Activated B cell treated with CpG ODN at 0.5 μM for 24 hours (primary cell): ENCODE measurements at regions of chr4 and their contacts with region 1.

Region 1: DNA sequence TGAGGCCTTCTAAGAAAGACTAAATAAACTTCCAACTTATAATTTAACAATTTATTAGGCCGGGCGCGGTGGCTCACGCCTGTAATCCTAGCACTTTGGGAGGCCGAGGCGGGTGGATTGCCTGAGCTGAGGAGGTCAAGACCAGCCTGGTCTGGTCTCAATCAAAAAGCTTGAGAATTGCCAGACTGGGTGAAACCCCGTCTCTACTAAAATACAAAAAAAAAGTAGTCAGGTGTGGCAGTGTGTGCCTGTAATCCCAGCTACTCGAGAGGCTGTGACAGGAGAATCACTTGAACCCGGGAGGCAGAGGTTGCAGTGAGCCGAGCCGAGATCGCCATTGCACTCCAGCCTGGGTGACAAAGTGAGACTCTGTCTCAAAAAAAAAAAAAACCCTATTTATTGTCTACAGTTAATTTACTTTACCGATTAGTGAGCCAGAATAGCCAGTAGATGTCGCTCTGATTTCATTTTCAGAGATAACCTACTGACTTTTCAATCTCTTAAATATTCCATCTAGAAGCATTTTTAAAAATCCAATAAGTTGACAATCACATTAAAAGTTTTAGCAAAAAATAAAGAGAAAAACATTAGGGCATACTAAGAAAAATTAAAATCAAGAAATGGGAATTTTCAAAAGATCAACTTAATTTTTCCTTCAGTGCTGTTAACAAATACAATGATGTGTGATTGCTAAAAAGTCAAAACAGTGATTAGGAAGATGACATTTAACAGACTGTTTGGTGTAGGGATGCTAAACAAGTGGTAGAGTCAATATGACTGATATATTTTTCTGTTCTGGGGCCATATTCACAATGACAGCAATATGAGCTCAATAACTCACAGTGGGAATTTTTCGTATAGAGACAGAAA is 4.3 kb upstream of the SHROOM3 start:
- DNase-seq: no peak
- ATAC-seq: peak; percentile 25
- H3K4me3 Mint-ChIP-seq: no peak overlapping the region
- H3K27ac Mint-ChIP-seq: no peak overlapping the region
- H3K4me1 Mint-ChIP-seq: peaks cover 13% of the 10 kb centered on the region
- H3K27me3 Mint-ChIP-seq: peaks cover 9% of the 10 kb centered on the region
- CTCF ChIP-seq: peak; percentile 62

Region 2: DNA sequence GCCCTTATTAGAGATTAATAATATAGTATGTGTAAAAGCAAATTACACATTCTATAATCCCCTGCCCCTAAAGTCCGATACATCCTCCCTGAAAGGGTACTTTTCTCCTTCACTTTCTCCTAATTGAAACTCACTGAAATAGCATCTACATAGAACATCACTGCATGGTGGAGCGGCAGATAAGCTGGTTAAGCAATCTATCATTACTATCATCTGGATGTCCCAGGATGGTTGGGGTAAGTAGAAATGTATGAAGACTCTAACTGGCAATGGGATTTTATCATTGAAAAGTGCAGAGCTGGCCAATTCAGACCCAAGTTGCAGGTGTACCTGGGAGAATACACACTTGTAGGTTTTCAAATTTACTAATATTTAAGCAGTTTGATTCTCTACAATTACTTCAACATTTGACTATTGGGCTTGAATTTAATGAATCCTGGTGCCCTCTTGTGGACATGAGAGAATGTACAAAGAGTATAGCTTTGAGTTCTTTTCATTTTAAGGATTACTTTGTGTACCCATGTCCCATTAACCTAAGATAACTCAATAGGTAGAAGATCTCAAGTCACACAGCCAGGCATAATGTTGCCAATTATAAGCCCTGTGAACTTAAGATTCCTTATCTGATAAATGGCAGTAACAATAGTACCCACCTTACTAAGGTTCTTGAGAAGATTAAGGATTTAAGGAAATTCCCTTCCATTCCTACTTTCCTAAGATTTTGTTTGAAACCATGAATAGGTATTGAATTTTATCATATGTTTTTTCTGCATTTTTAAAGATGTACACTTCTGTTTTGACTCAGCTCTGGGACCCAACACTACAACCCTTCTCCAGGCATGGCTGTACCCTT is 74.1 kb after region 1 on chr4:
- CTCF ChIA-PET with region 1: interaction called, 162 read pairs
- POLR2A ChIA-PET with region 1: interaction called, 7 read pairs
- intact Hi-C with region 1: loop called (anchors 1 kb)
- DNase-seq: no peak
- ATAC-seq: peak; percentile 45
- H3K4me3 Mint-ChIP-seq: no peak overlapping the region
- H3K27ac Mint-ChIP-seq: no peak overlapping the region
- H3K4me1 Mint-ChIP-seq: peaks cover 11% of the 10 kb centered on the region
- H3K27me3 Mint-ChIP-seq: no peaks in the 10 kb centered on the region
- CTCF ChIP-seq: no peak

Region 3: GRCh38 chr4:76748649-76749048 is 317.9 kb after region 1 on chr4:
- CTCF ChIA-PET with region 1: interaction called, 3 read pairs
- POLR2A ChIA-PET with region 1: no interaction called
- intact Hi-C with region 1: loop called (anchors 1 kb)
- DNase-seq: no peak
- ATAC-seq: peak; percentile 21
- H3K4me3 Mint-ChIP-seq: no peak overlapping the region
- H3K27ac Mint-ChIP-seq: no peak overlapping the region
- H3K4me1 Mint-ChIP-seq: no peaks in the 10 kb centered on the region
- H3K27me3 Mint-ChIP-seq: peaks cover 3% of the 10 kb centered on the region
- CTCF ChIP-seq: no peak

Region 4: GRCh38 chr4:76758290-76758882 is 327.6 kb after region 1 on chr4:
- CTCF ChIA-PET with region 1: interaction called, 29 read pairs
- POLR2A ChIA-PET with region 1: no interaction called
- intact Hi-C with region 1: loop called (anchors 1 kb)
- DNase-seq: no peak
- ATAC-seq: no peak
- H3K4me3 Mint-ChIP-seq: no peak overlapping the region
- H3K27ac Mint-ChIP-seq: no peak overlapping the region
- H3K4me1 Mint-ChIP-seq: no peaks in the 10 kb centered on the region
- H3K27me3 Mint-ChIP-seq: no peaks in the 10 kb centered on the region
- CTCF ChIP-seq: peak; percentile 67

Region 5: DNA sequence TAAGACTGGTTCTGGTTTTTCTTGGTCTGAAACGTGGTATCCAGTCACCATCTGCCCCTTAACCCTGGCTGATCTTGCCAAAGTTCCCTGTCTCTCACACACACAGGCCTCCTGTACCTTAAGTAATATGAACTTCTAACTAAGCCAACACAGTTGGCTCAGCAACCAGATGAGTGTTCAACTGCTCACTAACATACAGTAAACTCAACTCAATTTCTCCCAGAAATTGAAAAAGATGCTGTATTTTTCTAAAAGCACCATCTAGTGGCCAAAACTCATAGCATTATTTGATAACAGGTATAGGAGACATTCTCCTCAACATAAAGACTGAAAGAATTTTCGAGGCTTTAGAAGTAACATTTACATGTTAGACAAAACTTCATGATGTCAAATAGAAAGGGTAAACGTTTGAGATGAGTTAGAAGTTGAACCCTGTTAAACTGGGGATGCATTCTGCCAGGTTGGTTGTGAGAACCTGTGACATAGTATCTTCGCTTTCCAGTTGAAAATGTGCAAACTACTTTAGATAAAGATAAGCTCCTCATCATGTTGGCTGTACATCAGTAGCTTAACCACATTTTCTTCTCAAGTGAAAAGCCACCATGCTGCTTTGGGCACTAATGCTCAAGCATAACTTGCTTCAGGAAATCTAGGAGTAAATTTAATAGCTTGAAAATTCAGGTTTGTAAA is 613.9 kb after region 1 on chr4:
- CTCF ChIA-PET with region 1: interaction called, 7 read pairs
- POLR2A ChIA-PET with region 1: no interaction called
- intact Hi-C with region 1: loop called (anchors 2 kb)
- DNase-seq: no peak
- ATAC-seq: no peak
- H3K4me3 Mint-ChIP-seq: no peak overlapping the region
- H3K27ac Mint-ChIP-seq: no peak overlapping the region
- H3K4me1 Mint-ChIP-seq: peaks cover 17% of the 10 kb centered on the region
- H3K27me3 Mint-ChIP-seq: no peaks in the 10 kb centered on the region
- CTCF ChIP-seq: peak; percentile 31

Region 6: GRCh38 chr4:77358315-77358928 is 927.7 kb after region 1 on chr4:
- CTCF ChIA-PET with region 1: no interaction called
- POLR2A ChIA-PET with region 1: no interaction called
- intact Hi-C with region 1: loop called (anchors 5 kb)
- DNase-seq: no peak
- ATAC-seq: no peak
- H3K4me3 Mint-ChIP-seq: no peak overlapping the region
- H3K27ac Mint-ChIP-seq: no peak overlapping the region
- H3K4me1 Mint-ChIP-seq: peaks cover 17% of the 10 kb centered on the region
- H3K27me3 Mint-ChIP-seq: peaks cover 3% of the 10 kb centered on the region
- CTCF ChIP-seq: no peak